ENCODE measurements at regions of chr13 and their contacts with region 1.

Region 1: GRCh38 chr13:28586439-28587173 is 72.3 kb upstream of the POMP start:
- DNase-seq: no peak
- H3K4me3 ChIP-seq: no peak overlapping the region
- H3K27ac ChIP-seq: no peak overlapping the region
- H3K4me1 ChIP-seq: peaks cover 5% of the 10 kb centered on the region
- H3K27me3 ChIP-seq: no peaks in the 10 kb centered on the region
- CTCF ChIP-seq: no peak

Region 2: DNA sequence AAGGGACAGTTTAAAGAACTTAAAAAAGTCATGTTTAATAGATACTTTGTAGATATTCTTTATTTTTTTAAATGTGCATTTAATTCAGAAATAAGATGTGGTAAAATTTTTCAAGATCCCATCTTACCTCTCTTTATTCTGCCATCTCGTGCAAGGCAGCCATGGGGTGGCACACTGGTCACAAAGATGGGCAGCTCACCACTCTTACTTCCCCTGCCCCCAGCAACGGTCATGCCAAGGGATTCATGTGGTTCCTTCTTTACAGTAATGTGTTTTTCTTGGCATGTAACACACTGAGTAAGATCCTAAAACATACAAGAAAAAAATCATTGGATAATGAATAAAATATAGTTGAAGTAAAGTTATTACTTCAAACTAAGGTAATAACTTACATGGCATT is 1030.5 kb before region 1 on chr13:
- CTCF ChIA-PET with region 1: no interaction called
- POLR2A ChIA-PET with region 1: no interaction called
- intact Hi-C with region 1: no loop called
- DNase-seq: no peak
- H3K4me3 ChIP-seq: no peak overlapping the region
- H3K27ac ChIP-seq: no peak overlapping the region
- H3K4me1 ChIP-seq: no peaks in the 10 kb centered on the region
- H3K27me3 ChIP-seq: no peaks in the 10 kb centered on the region
- CTCF ChIP-seq: 0 out of 2 replicates have a peak, but pooled peaks have one; percentile 17

Region 3: GRCh38 chr13:28654276-28654675 is 67.7 kb after region 1 on chr13:
- CTCF ChIA-PET with region 1: interaction called, 14 read pairs
- POLR2A ChIA-PET with region 1: no interaction called
- intact Hi-C with region 1: no loop called
- DNase-seq: no peak
- H3K4me3 ChIP-seq: no peak overlapping the region
- H3K27ac ChIP-seq: no peak overlapping the region
- H3K4me1 ChIP-seq: peaks cover 13% of the 10 kb centered on the region
- H3K27me3 ChIP-seq: no peaks in the 10 kb centered on the region
- CTCF ChIP-seq: no peak

Region 4: DNA sequence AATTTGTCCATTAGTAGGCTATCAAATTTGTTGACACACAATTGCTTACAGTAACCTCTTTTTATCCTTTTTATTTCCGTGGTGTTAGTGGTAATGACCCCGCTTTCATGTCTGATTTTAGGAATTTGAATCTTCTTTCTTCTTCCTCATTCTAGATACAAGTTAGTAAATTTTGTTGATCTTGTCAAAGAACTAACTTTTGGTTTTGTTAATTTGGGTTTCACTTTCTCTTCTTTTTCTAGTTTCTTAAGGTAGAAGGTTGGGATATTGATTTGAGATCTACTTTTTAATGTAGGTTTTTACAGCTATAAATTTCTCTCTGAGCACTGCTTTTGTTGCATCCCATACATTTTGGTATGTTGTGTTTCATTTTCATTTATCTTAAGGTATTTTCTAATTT is 1062.2 kb after region 1 on chr13:
- CTCF ChIA-PET with region 1: no interaction called
- POLR2A ChIA-PET with region 1: no interaction called
- intact Hi-C with region 1: no loop called
- DNase-seq: no peak
- H3K4me3 ChIP-seq: no peak overlapping the region
- H3K27ac ChIP-seq: no peak overlapping the region
- H3K4me1 ChIP-seq: no peaks in the 10 kb centered on the region
- H3K27me3 ChIP-seq: peaks cover 4% of the 10 kb centered on the region
- CTCF ChIP-seq: no peak

Measured in A673 (cell line).